Common myeloid progenitor, CD34-positive (primary cell): ENCODE measurements at regions of chr21 and their contacts with region 1.

Region 1: DNA sequence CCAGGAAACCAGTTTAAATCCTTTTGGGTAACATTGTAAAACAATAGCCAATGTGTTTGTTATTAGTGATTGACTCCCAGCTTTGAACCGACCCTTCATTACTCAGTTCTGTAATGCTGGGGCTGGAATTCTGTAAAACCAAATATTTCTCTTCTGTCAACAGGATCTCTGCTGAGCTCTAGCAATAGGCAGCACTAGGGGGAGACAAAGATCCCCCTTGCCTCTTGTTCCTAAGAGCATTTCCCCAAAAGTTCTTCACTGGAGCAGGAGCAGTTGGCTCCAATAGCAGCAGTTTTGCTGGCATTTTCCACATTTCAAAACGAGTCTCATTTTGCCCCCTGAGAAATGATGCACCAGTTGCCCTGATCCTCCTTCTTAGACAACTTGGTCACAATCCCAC is 1671.1 kb downstream of the MRPL39 start:
- DNase-seq: peak; percentile 47 to 70 (median 50)
- H3K4me3 ChIP-seq: no peak overlapping the region
- H3K27ac ChIP-seq: no peak overlapping the region
- H3K4me1 ChIP-seq: no peaks in the 10 kb centered on the region
- H3K27me3 ChIP-seq: no peaks in the 10 kb centered on the region

Region 2: DNA sequence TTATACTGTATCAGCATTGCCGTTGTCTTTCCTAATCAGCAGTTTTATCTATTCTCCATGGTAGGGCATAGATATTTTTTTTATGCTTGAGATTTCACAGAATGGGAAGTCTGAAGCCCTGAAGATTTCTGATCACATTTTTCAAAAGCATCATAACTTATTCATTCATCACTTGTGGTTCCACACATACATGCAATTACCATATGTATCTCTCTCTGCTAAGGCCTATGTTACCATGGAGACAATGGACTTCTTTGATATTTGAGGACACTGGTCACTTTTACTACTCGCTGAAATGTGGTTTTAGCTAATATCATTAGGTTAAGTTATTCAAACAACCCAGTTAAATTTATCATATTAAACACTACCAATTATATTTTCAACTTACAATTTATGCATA is 155.9 kb before region 1 on chr21:
- CTCF ChIA-PET with region 1: no interaction called
- POLR2A ChIA-PET with region 1: no interaction called
- DNase-seq: no peak
- H3K4me3 ChIP-seq: no peak overlapping the region
- H3K27ac ChIP-seq: no peak overlapping the region
- H3K4me1 ChIP-seq: no peaks in the 10 kb centered on the region
- H3K27me3 ChIP-seq: no peaks in the 10 kb centered on the region

Region 3: DNA sequence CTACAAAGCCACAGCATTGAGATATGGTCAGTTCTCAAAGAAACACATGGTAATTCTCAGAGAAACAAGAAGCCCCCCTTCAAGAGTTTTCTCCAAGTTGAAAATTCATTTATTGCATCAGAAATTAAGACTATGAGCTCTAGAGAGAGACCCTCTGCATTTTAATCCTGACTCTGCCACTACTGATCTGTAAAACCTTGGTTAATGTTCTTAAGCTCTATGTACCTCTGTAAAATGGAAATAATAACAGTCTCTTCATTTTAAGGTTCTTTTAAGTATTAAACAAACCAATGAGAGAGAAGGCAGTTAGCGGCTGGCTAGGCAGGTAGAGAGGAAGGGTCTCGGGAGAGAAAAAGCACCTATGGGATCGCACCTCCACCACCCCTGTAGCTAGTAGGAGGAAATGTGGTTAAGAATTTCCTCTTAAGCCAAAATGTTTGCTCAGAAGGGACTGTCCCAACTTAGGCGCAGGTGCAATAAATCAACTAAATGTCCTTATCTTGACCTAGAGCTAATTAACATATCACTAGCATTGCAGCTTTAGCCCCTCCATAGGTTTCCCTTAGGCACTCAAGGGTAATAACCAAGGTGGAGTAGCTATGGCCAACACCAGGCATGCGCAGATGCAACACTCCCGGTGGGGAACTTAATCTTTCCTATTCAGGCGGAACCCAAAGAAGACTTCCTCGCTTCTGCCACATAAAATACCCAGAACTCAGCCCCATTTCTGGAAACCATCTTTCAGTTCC is 14.4 kb before region 1 on chr21:
- CTCF ChIA-PET with region 1: interaction called, 12 read pairs
- POLR2A ChIA-PET with region 1: no interaction called
- DNase-seq: peak in 2 of 3 donors; percentile 9 to 16
- H3K4me3 ChIP-seq: no peak overlapping the region
- H3K27ac ChIP-seq: no peak overlapping the region
- H3K4me1 ChIP-seq: peaks cover 0 to 9% (median 4%) of the 10 kb centered on the region in 4 experiments
- H3K27me3 ChIP-seq: no peaks in the 10 kb centered on the region